Activated CD8-positive, alpha-beta T cell treated with anti-CD3 and anti-CD28 coated beads, Interleukin-2, amount 10 ng/mL, durations not matched to agents 7 days and 5 days (primary cell): ENCODE measurements at regions of chr1 and their contacts with region 1.

Region 1: DNA sequence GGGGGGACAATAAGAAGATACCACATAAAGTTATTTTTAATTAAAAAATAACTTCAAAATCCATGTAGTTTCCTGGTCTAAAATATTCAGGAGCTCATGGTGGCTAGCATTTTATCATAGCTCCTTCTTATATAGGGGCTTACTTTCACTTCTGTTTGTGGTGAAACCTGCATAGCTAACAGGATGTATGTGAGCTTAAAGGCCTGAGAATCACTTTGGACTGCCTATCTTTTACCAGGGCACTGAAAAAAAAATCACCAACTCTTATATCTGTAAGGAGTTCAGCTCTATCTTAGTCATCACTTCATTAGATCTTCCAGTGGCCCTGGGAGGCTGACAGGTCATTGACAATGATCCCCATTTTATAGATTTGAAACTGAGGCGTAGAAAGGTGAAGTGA is 21.3 kb downstream of the UROD start:
- DNase-seq: no peak
- ATAC-seq: peak; percentile 91
- H3K4me3 Mint-ChIP-seq: no peak overlapping the region
- H3K27ac Mint-ChIP-seq: peak overlapping the region; percentile 83
- H3K4me1 Mint-ChIP-seq: peaks cover 13% of the 10 kb centered on the region
- H3K27me3 Mint-ChIP-seq: no peaks in the 10 kb centered on the region

Region 2: DNA sequence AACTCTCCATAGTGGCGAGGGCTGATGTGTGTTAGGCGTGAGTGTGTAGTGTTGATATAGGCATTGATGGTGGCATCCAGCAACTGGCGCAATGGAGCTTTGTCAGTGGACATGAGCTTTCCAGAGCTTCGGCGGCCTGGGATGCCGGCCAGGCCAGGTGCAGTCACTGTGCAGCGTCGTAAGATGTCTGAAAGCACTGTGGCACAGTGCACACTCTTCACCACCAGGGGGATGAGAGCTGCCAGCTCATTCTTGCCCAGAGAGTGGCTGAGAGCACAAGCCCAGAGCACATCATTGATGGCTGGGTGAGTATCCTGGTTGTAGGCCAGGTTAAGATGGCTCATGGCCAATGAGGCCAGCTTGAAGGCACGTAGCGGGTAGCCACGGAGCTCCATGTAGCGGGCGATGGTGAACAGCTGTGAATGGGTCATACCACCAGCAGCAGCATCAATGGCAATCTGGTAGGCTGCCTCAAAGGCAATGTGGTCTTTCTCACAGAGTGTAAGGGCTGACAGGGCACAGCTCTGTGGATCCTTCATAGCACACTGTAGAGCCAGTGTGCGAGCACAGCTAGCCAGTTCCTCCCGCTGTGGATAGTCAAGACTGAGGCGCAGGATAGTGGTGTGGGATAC is 14.6 kb before region 1 on chr1:
- CTCF ChIA-PET with region 1: interaction called, 19 read pairs
- POLR2A ChIA-PET with region 1: no interaction called
- DNase-seq: peak; percentile 73
- ATAC-seq: peak; percentile 86
- H3K4me3 Mint-ChIP-seq: no peak overlapping the region
- H3K27ac Mint-ChIP-seq: no peak overlapping the region
- H3K4me1 Mint-ChIP-seq: peaks cover 14% of the 10 kb centered on the region
- H3K27me3 Mint-ChIP-seq: no peaks in the 10 kb centered on the region

Region 3: GRCh38 chr1:45059829-45060228 is 26.5 kb after region 1 on chr1:
- CTCF ChIA-PET with region 1: no interaction called
- POLR2A ChIA-PET with region 1: no interaction called
- DNase-seq: no peak
- ATAC-seq: no peak
- H3K4me3 Mint-ChIP-seq: no peak overlapping the region
- H3K27ac Mint-ChIP-seq: no peak overlapping the region
- H3K4me1 Mint-ChIP-seq: peaks cover 3% of the 10 kb centered on the region
- H3K27me3 Mint-ChIP-seq: no peaks in the 10 kb centered on the region